ENCODE measurements at regions of chr22 and their contacts with region 1.

Region 1: GRCh38 chr22:33781411-33781810 is 138.9 kb downstream of the LARGE1 start:
- DNase-seq: peak in 4 of 5 donors; percentile 26 to 58 (median 43)
- ATAC-seq: peak; percentile 91 to 94 (median 94)
- H3K4me3 ChIP-seq: no peak overlapping the region
- H3K27ac ChIP-seq: peak overlapping the region; percentile 39 to 84 (median 74)
- H3K4me1 ChIP-seq: peaks cover 0 to 56% (median 23%) of the 10 kb centered on the region in 12 donors
- H3K27me3 ChIP-seq: no peaks in the 10 kb centered on the region
- CTCF ChIP-seq: no peak
- POLR2A ChIP-seq: no peak

Region 2: GRCh38 chr22:33605666-33606065 is 175.7 kb before region 1 on chr22:
- intact Hi-C with region 1: loop called in 1 of 10 experiments (anchors 10 kb)
- DNase-seq: peak in 4 of 5 donors; percentile 58 to 80 (median 69)
- ATAC-seq: peak; percentile 94 to 98 (median 95)
- H3K4me3 ChIP-seq: no peak overlapping the region
- H3K27ac ChIP-seq: peak overlapping the region; percentile 41 to 94 (median 74)
- H3K4me1 ChIP-seq: peaks cover 0 to 35% (median 6%) of the 10 kb centered on the region in 12 donors
- H3K27me3 ChIP-seq: no peaks in the 10 kb centered on the region
- CTCF ChIP-seq: no peak
- POLR2A ChIP-seq: no peak

Region 3: GRCh38 chr22:33746501-33746928 is 34.9 kb before region 1 on chr22:
- intact Hi-C with region 1: no loop called
- DNase-seq: no peak
- ATAC-seq: peak in 2 of 4 donors; percentile 31 to 34
- H3K4me3 ChIP-seq: no peak overlapping the region
- H3K27ac ChIP-seq: no peak overlapping the region
- H3K4me1 ChIP-seq: peaks cover 0 to 43% (median 8%) of the 10 kb centered on the region in 12 donors
- H3K27me3 ChIP-seq: no peaks in the 10 kb centered on the region
- CTCF ChIP-seq: no peak
- POLR2A ChIP-seq: no peak

Region 4: GRCh38 chr22:33873186-33873585 is 91.8 kb after region 1 on chr22:
- intact Hi-C with region 1: loop called in 1 of 10 experiments (anchors 5 kb)
- DNase-seq: peak in 4 of 5 donors; percentile 65 to 84 (median 76)
- ATAC-seq: peak; percentile 85 to 91 (median 88)
- H3K4me3 ChIP-seq: peak overlapping the region in 3 of 12 donors; percentile 12 to 41 (median 41)
- H3K27ac ChIP-seq: peak overlapping the region in 11 of 12 donors; percentile 4 to 88 (median 81)
- H3K4me1 ChIP-seq: peaks cover 3 to 81% (median 53%) of the 10 kb centered on the region in 12 donors
- H3K27me3 ChIP-seq: no peaks in the 10 kb centered on the region
- CTCF ChIP-seq: no peak
- POLR2A ChIP-seq: peak in 1 of 2 donors; percentile 45